ENCODE measurements at regions of chr9 and their contacts with region 1.

Region 1: GRCh38 chr9:6353851-6354686 is 25.9 kb downstream of the TPD52L3 start:
- DNase-seq: no peak
- H3K4me3 ChIP-seq: no peak overlapping the region
- H3K27ac ChIP-seq: no peak overlapping the region
- H3K4me1 ChIP-seq: no peaks in the 10 kb centered on the region
- H3K27me3 ChIP-seq: no peaks in the 10 kb centered on the region
- CTCF ChIP-seq: peak in 2 of 3 donors; percentile 21 to 41
- EP300 ChIP-seq: no peak
- POLR2A ChIP-seq: no peak

Region 2: GRCh38 chr9:5953743-5954707 is 400.0 kb before region 1 on chr9:
- intact Hi-C with region 1: no loop called
- DNase-seq: no peak
- H3K4me3 ChIP-seq: no peak overlapping the region
- H3K27ac ChIP-seq: no peak overlapping the region
- H3K4me1 ChIP-seq: peaks cover 1% of the 10 kb centered on the region
- H3K27me3 ChIP-seq: no peaks in the 10 kb centered on the region
- CTCF ChIP-seq: no peak
- EP300 ChIP-seq: no peak
- POLR2A ChIP-seq: no peak

Region 3: DNA sequence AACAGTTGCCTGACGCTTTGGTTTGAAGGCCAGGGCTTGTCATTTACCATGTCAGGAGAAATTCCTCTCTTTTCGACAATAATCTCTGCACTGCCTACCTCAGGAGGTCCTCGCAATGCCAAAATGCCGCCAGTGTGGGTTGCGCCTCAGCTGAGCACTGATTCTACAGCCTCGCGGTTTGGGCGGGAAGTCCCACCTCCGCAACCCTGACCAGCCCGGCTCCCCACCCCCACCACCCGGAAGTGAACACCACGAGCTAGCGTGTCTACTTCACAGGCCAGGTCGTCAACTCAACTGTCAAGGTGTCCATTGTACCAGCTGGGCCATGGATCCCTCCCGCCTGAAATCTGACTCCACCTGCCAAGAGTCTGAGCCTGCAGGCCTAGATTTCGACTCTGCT is 26.0 kb before region 1 on chr9 and contains the start of gene TPD52L3:
- intact Hi-C with region 1: no loop called
- DNase-seq: no peak
- H3K4me3 ChIP-seq: no peak within 1 kb of the TSS
- H3K27ac ChIP-seq: no peak within 1 kb of the TSS
- H3K4me1 ChIP-seq: no peaks in the 10 kb centered on the region
- H3K27me3 ChIP-seq: no peaks in the 10 kb centered on the region
- CTCF ChIP-seq: no peak
- EP300 ChIP-seq: no peak
- POLR2A ChIP-seq: no peak
- total RNA-seq, gene TPD52L3: not detected

Region 4: GRCh38 chr9:6723881-6724420 is 369.9 kb after region 1 on chr9:
- intact Hi-C with region 1: loop called in 1 of 4 experiments (anchors 5 kb)
- DNase-seq: no peak
- H3K4me3 ChIP-seq: no peak overlapping the region
- H3K27ac ChIP-seq: no peak overlapping the region
- H3K4me1 ChIP-seq: no peaks in the 10 kb centered on the region
- H3K27me3 ChIP-seq: no peaks in the 10 kb centered on the region
- CTCF ChIP-seq: no peak
- EP300 ChIP-seq: no peak
- POLR2A ChIP-seq: no peak